ENCODE measurements at regions of chr1 and their contacts with region 1.

Region 1: GRCh38 chr1:93607814-93608186 is 73.8 kb downstream of the BCAR3 start:
- DNase-seq: peak; percentile 82
- ATAC-seq: peak; percentile 95
- H3K4me3 Mint-ChIP-seq: no peak overlapping the region
- H3K27ac Mint-ChIP-seq: peak overlapping the region; percentile 63
- H3K4me1 Mint-ChIP-seq: peaks cover 43% of the 10 kb centered on the region
- H3K27me3 Mint-ChIP-seq: peaks cover 16% of the 10 kb centered on the region

Region 2: GRCh38 chr1:93447516-93448291 is 160.1 kb before region 1 on chr1 and contains the start of gene FNBP1L:
- CTCF ChIA-PET with region 1: interaction called, 3 read pairs
- POLR2A ChIA-PET with region 1: no interaction called
- intact Hi-C with region 1: loop called in 1 of 2 experiments (anchors 5 kb)
- DNase-seq: peak; percentile 81
- ATAC-seq: peak; percentile 87
- H3K4me3 Mint-ChIP-seq: peak within 1 kb of the TSS; percentile 83
- H3K27ac Mint-ChIP-seq: peak within 1 kb of the TSS; percentile 72
- H3K4me1 Mint-ChIP-seq: peaks cover 15% of the 10 kb centered on the region
- H3K27me3 Mint-ChIP-seq: peaks cover 24% of the 10 kb centered on the region
- total RNA-seq, gene FNBP1L: 1.2 to 1.4 TPM

Region 3: GRCh38 chr1:93537924-93538323 is 69.9 kb before region 1 on chr1:
- CTCF ChIA-PET with region 1: no interaction called
- POLR2A ChIA-PET with region 1: no interaction called
- intact Hi-C with region 1: loop called in 1 of 2 experiments (anchors 2 kb)
- DNase-seq: no peak
- ATAC-seq: peak; percentile 83
- H3K4me3 Mint-ChIP-seq: no peak overlapping the region
- H3K27ac Mint-ChIP-seq: no peak overlapping the region
- H3K4me1 Mint-ChIP-seq: peaks cover 6% of the 10 kb centered on the region
- H3K27me3 Mint-ChIP-seq: no peaks in the 10 kb centered on the region

Region 4: GRCh38 chr1:93629099-93630059 is 21.6 kb after region 1 on chr1:
- CTCF ChIA-PET with region 1: interaction called, 10 read pairs
- POLR2A ChIA-PET with region 1: interaction called, 4 read pairs
- intact Hi-C with region 1: no loop called
- DNase-seq: peak; percentile 56
- ATAC-seq: peak; percentile 78
- H3K4me3 Mint-ChIP-seq: no peak overlapping the region
- H3K27ac Mint-ChIP-seq: no peak overlapping the region
- H3K4me1 Mint-ChIP-seq: no peaks in the 10 kb centered on the region
- H3K27me3 Mint-ChIP-seq: no peaks in the 10 kb centered on the region

Region 5: GRCh38 chr1:93652323-93652949 is 44.6 kb after region 1 on chr1:
- CTCF ChIA-PET with region 1: no interaction called
- POLR2A ChIA-PET with region 1: no interaction called
- intact Hi-C with region 1: no loop called
- DNase-seq: no peak
- ATAC-seq: no peak
- H3K4me3 Mint-ChIP-seq: no peak overlapping the region
- H3K27ac Mint-ChIP-seq: no peak overlapping the region
- H3K4me1 Mint-ChIP-seq: peaks cover 3% of the 10 kb centered on the region
- H3K27me3 Mint-ChIP-seq: no peaks in the 10 kb centered on the region

Region 6: GRCh38 chr1:93692983-93693591 is 85.3 kb after region 1 on chr1:
- CTCF ChIA-PET with region 1: no interaction called
- POLR2A ChIA-PET with region 1: no interaction called
- intact Hi-C with region 1: loop called (anchors 1 kb)
- DNase-seq: peak; percentile 76
- ATAC-seq: peak; percentile 95
- H3K4me3 Mint-ChIP-seq: no peak overlapping the region
- H3K27ac Mint-ChIP-seq: peak overlapping the region; percentile 55
- H3K4me1 Mint-ChIP-seq: peaks cover 17% of the 10 kb centered on the region
- H3K27me3 Mint-ChIP-seq: peaks cover 4% of the 10 kb centered on the region

Region 7: GRCh38 chr1:93707956-93708355 is 100.2 kb after region 1 on chr1:
- CTCF ChIA-PET with region 1: no interaction called
- POLR2A ChIA-PET with region 1: no interaction called
- intact Hi-C with region 1: no loop called
- DNase-seq: peak; percentile 79
- ATAC-seq: peak; percentile 97
- H3K4me3 Mint-ChIP-seq: no peak overlapping the region
- H3K27ac Mint-ChIP-seq: peak overlapping the region; percentile 40
- H3K4me1 Mint-ChIP-seq: peaks cover 38% of the 10 kb centered on the region
- H3K27me3 Mint-ChIP-seq: peaks cover 19% of the 10 kb centered on the region

Region 8: DNA sequence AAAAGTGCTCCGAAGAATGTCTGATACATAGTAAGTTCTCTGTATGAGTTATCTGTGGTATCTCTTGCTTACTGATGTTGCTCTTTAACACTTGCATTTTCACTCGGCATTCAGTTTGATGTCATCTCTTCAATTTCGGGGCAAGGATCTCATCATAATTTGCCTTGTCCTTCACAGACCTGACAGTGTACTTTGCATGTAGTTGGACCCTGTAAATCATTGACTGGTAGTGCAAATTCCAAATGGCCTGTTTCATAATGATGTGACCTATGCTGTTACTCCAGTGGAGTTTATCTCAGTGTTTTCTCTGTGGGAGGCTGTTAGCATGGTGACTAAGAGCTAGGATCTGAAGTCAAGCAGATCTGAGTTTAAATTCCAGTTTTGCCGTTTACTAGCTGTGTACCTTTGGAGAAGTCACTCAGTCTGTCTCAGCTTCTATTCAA is 776.2 kb after region 1 on chr1:
- CTCF ChIA-PET with region 1: no interaction called
- POLR2A ChIA-PET with region 1: no interaction called
- intact Hi-C with region 1: loop called in 1 of 2 experiments (anchors 5 kb)
- DNase-seq: peak; percentile 22
- ATAC-seq: peak; percentile 76
- H3K4me3 Mint-ChIP-seq: peak overlapping the region; percentile 61
- H3K27ac Mint-ChIP-seq: peak overlapping the region; percentile 92
- H3K4me1 Mint-ChIP-seq: peaks cover 62% of the 10 kb centered on the region
- H3K27me3 Mint-ChIP-seq: no peaks in the 10 kb centered on the region

Measured in activated CD4-positive, alpha-beta T cell treated with anti-CD3 and anti-CD28 coated beads for 36 hours (primary cell).